Activated naive CD8-positive, alpha-beta T cell treated with anti-CD3 and anti-CD28 coated beads, Interleukin-2, amount 10 ng/mL, durations not matched to agents 7 days and 5 days (primary cell): ENCODE measurements at regions of chr17 and their contacts with region 1.

Region 1: GRCh38 chr17:4806777-4807604 is at the start of gene PLD2:
- DNase-seq: peak; percentile 92
- ATAC-seq: peak; percentile 97
- H3K4me3 Mint-ChIP-seq: peak within 1 kb of the TSS; percentile 81
- H3K27ac Mint-ChIP-seq: peak within 1 kb of the TSS; percentile 61
- H3K4me1 Mint-ChIP-seq: peaks cover 12% of the 10 kb centered on the region
- H3K27me3 Mint-ChIP-seq: no peaks in the 10 kb centered on the region
- total RNA-seq, gene PLD2: 18.8 to 21.7 TPM

Region 2: DNA sequence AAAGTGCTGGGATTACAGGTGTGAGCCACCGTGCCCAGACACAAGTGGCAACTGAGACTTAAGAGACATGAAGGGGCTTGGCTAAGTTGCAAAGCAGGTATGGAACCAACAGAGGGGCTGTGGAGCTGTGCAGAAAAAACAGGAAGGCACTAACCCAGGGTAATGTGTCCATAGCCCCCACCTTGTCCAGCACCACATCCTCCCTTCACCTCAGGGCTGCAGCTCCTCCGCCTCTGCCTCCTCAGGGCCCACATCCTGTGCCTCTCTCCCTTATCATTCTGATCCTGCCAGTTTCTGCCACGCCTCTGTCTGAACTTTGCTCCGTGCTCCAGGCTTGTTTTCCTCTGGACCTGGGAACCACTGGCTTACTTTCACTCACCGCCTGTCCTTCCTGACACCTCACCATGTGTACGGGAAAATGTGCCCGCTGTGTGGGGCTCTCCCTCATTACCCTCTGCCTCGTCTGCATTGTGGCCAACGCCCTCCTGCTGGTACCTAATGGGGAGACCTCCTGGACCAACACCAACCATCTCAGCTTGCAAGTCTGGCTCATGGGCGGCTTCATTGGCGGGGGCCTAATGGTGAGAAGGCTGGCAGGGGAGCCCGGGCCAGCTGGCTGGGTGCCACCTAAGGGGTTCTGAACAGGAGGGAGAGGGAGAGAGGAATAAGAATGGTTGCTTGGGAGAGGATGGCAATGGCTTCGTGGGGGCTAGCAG is 35.3 kb before region 1 on chr17 and contains the start of gene TM4SF5:
- POLR2A ChIA-PET with region 1: no interaction called
- DNase-seq: peak; percentile 52
- ATAC-seq: peak; percentile 100
- H3K4me3 Mint-ChIP-seq: peak within 1 kb of the TSS; percentile 17
- H3K27ac Mint-ChIP-seq: peak within 1 kb of the TSS; percentile 62
- H3K4me1 Mint-ChIP-seq: peaks cover 13% of the 10 kb centered on the region
- H3K27me3 Mint-ChIP-seq: peaks cover 25% of the 10 kb centered on the region
- total RNA-seq, gene TM4SF5: not detected

Region 3: GRCh38 chr17:4789901-4790704 is 16.9 kb before region 1 on chr17:
- POLR2A ChIA-PET with region 1: interaction called, 17 read pairs
- DNase-seq: peak; percentile 89
- ATAC-seq: peak; percentile 95
- H3K4me3 Mint-ChIP-seq: peak overlapping the region; percentile 87
- H3K27ac Mint-ChIP-seq: peak overlapping the region; percentile 87
- H3K4me1 Mint-ChIP-seq: peaks cover 19% of the 10 kb centered on the region
- H3K27me3 Mint-ChIP-seq: peaks cover 56% of the 10 kb centered on the region

Region 4: DNA sequence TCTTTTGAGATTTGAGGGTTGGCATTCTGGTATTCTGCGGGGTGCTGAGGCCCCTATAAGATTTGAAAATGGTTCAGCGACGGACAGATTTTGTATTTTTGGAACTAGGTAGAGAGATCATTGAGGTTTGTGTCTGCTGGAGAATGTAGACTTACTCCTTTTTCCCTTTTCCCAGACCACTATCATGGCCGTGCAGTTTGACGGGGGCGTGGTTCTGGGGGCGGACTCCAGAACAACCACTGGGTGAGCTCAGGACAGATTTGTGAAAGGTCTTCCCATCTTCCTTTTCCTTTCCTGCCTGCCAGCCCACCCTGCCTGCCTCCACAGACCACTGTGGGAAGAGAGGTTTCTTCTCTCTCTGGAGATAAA is 10.5 kb before region 1 on chr17:
- POLR2A ChIA-PET with region 1: interaction called, 20 read pairs
- DNase-seq: no peak
- ATAC-seq: no peak
- H3K4me3 Mint-ChIP-seq: peak overlapping the region; percentile 99
- H3K27ac Mint-ChIP-seq: peak overlapping the region; percentile 96
- H3K4me1 Mint-ChIP-seq: peaks cover 12% of the 10 kb centered on the region
- H3K27me3 Mint-ChIP-seq: peaks cover 12% of the 10 kb centered on the region

Region 5: DNA sequence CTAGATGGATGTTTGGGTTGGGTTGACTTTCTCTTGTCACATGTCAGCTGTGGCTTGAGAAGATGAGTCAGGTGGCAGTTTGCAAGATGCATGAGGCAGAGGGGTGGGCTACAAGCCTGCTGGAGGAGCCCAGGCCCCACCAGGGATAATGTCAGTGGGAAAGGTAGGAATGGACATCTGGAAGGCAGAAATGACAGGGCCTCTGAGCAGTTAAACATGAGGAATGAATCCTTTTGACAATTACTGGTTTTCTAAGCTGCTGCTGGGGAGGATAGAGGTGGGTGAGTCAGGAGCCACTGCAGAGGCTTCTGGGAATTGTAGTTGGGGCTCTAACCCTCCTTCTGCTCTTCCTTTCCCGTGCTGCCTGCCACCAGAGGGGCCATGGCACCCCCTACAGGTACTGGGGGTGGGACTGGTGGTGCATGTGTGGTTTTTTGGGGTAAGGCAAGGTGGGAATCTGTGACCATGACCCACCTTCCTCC is 212.5 kb after region 1 on chr17:
- POLR2A ChIA-PET with region 1: no interaction called
- DNase-seq: peak; percentile 50
- ATAC-seq: peak; percentile 69
- H3K4me3 Mint-ChIP-seq: no peak overlapping the region
- H3K27ac Mint-ChIP-seq: peak overlapping the region; percentile 76
- H3K4me1 Mint-ChIP-seq: peaks cover 17% of the 10 kb centered on the region
- H3K27me3 Mint-ChIP-seq: no peaks in the 10 kb centered on the region